Adrenal gland (tissue), 19 donors: ENCODE measurements at regions of chr5 and their contacts with region 1.

Region 1: DNA sequence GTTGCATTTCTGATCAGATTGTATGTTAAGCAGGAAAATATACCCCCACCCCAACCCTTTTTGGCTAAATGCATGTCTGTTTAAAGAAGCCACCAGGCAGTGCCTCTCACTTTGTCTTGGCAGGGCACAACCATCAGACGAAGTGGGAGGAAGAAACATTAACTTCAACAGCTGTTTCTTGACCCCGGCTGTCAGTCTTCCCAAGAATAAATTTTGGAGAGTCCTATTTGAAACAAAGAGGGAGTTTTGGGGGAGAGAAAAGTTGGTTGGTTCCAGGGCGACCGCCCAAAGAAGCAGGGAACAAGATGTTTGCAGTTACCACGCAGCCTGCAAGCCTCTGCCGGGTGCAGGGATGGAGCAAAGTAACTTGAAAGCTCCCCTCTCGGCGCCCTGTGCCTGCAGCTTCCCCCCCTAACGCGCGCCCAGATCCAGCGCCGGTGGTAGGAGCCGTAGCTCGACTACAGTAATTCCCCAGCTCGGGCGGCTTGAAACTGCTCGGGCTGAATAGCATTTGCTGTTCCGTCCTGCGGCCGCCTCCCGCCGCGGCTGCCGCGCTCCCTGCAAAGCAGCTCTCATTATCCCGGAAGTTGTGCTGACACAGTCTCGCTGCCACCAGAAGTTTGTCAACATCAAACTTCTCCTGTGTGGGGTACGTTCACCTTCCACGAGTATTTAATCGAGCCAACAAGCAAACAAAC is 100.7 kb upstream of the SSBP2 start:
- DNase-seq: peak; percentile 95 to 98 (median 96)
- H3K4me3 ChIP-seq: peak overlapping the region in 2 of 4 donors; percentile 36 to 73
- H3K27ac ChIP-seq: peak overlapping the region; percentile 40 to 94 (median 88)
- H3K4me1 ChIP-seq: peaks cover 14 to 24% of the 10 kb centered on the region in 2 donors
- H3K27me3 ChIP-seq: no peaks in the 10 kb centered on the region
- CTCF ChIP-seq: peak in 1 of 6 experiments; percentile 10
- POLR2A ChIP-seq: peak in 1 of 2 donors; percentile 62

Region 2: DNA sequence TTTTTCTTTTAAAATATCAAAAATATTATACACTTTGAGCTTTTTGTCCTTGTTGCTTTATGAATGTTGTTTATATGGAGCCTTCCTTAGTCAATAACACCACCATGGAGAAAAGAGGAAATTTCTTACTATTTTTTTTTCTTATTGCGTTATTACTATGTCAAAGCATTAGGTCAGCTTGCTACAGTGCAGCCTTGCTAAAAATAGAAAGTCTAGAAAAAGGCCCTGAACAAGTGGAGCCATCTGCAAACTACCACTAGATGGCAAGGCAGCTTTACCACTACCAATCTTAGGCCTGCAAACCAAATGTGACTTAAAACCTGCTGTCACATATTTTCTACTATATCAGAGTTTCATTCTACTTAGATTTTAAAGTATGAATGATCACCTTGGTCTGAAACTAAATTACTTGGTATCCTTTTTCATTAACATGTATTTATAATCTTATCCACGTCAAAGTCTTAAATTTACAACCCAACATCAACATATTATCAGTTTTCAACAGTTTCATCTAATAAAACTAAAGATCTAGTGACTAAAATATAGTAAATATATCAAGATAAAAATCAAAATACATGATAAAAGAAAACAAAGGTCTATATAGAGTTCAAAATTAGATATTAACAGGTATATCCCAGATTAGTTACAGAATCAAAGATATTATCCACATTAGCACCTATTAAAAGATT is 344.6 kb before region 1 on chr5:
- intact Hi-C with region 1: loop called (anchors 10 kb)
- DNase-seq: peak; percentile 62 to 91 (median 72)
- H3K4me3 ChIP-seq: no peak overlapping the region
- H3K27ac ChIP-seq: peak overlapping the region in 1 of 5 donors; percentile 55
- H3K4me1 ChIP-seq: peaks cover 0 to 6% of the 10 kb centered on the region in 2 donors
- H3K27me3 ChIP-seq: no peaks in the 10 kb centered on the region
- CTCF ChIP-seq: peak; percentile 71 to 95 (median 93)
- POLR2A ChIP-seq: no peak

Region 3: DNA sequence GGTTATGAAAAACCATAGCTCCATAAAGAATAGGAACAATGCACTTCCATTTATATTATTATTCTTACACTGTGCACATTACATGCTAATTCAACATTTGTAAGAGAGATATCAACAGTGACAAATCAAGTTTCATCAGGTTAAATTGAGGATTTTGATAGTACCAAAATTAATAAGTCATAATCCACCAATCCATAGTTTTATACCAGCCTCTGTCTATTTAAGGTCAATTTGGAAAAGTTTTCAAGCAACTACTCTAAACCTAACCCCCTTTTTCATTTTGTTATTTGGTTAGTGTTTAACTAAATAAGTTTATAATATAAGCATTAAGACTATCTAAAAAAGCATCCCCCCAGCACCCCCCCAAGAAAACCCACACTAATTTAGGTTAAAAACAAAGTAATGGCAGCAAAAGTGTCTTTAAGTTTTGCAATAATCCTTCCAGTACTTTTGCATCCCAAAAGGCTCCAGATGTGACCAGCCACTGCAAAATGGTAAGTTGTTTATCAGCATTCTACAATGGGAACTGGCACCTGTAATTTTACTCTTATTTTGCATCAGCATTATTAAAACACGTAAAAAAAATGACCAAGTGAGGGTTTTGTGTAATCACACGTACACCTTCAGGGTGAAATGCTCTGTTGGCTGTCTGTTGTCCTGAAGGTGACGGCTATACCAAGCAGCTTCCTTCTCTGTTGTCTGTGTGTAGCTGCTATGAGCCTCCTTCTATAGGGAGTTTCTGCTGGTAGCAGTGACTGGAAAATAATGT is 64.0 kb before region 1 on chr5:
- intact Hi-C with region 1: loop called (anchors 5 to 10 kb)
- DNase-seq: peak; percentile 73 to 84 (median 77)
- H3K4me3 ChIP-seq: peak overlapping the region in 1 of 4 donors; percentile 16
- H3K27ac ChIP-seq: peak overlapping the region in 1 of 5 donors; percentile 5
- H3K4me1 ChIP-seq: peaks cover 10 to 22% of the 10 kb centered on the region in 2 donors
- H3K27me3 ChIP-seq: no peaks in the 10 kb centered on the region
- CTCF ChIP-seq: no peak
- POLR2A ChIP-seq: peak in 1 of 2 donors; percentile 12

Region 4: GRCh38 chr5:81971712-81972495 is 120.3 kb after region 1 on chr5 and contains the start of gene ATG10:
- intact Hi-C with region 1: loop called in 1 of 2 experiments (anchors 10 kb)
- DNase-seq: peak; percentile 88 to 94 (median 93)
- H3K4me3 ChIP-seq: peak within 1 kb of the TSS; percentile 66 to 94 (median 80)
- H3K27ac ChIP-seq: peak within 1 kb of the TSS; percentile 85 to 99 (median 98)
- H3K4me1 ChIP-seq: peaks cover 6 to 8% of the 10 kb centered on the region in 2 donors
- H3K27me3 ChIP-seq: no peaks in the 10 kb centered on the region
- CTCF ChIP-seq: no peak
- POLR2A ChIP-seq: peak; percentile 91 to 95
- total RNA-seq, gene ATG10: 4.1 to 15.1 (median 7.7) TPM